ENCODE measurements at regions of chr20 and their contacts with region 1.

Region 1: DNA sequence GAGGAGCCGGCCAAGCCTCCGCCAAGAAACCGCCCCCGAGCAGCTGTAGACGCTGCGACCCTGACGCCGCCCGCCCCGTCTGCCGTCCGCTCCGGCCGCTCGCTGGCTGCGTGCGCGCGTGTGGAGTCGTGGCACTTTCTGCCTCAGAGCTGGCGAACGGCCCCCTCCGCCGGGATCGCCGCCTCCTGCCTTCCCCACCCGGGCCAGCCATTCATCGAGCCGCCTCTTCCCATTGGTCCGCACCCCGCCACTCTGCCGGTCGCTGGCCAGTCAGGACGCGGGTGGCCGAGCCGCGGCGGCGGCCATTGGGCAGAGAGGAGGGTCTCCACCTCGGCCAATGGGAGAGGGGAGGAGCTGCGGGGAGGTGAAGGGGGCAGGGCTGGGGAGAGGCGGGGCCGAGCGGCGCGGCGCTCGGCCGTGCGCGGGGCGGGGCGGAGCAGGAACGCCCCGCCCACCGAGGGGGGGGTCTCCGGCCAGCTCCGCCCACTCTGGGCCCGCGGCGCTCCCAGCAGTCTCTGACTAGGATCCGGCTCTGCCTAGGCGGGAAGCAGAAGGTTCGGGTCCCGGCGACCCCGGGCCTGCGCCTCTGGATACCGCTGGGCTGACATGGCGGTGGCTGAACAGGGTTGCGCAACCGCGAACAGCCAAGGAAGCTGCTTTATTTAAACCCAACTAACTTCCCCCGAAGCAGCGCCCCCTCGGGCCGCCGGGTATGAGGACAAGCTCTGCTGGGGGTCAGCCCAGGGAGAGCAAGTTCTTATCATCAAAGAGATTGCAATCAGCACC is at the start of gene RRBP1:
- DNase-seq: peak; percentile 98
- ATAC-seq: peak; percentile 97
- H3K4me3 Mint-ChIP-seq: peak within 1 kb of the TSS; percentile 77
- H3K27ac Mint-ChIP-seq: peak within 1 kb of the TSS; percentile 88
- H3K4me1 Mint-ChIP-seq: peaks cover 32% of the 10 kb centered on the region
- H3K27me3 Mint-ChIP-seq: peaks cover 29% of the 10 kb centered on the region
- total RNA-seq, gene RRBP1: 64.3 to 66.7 TPM

Region 2: DNA sequence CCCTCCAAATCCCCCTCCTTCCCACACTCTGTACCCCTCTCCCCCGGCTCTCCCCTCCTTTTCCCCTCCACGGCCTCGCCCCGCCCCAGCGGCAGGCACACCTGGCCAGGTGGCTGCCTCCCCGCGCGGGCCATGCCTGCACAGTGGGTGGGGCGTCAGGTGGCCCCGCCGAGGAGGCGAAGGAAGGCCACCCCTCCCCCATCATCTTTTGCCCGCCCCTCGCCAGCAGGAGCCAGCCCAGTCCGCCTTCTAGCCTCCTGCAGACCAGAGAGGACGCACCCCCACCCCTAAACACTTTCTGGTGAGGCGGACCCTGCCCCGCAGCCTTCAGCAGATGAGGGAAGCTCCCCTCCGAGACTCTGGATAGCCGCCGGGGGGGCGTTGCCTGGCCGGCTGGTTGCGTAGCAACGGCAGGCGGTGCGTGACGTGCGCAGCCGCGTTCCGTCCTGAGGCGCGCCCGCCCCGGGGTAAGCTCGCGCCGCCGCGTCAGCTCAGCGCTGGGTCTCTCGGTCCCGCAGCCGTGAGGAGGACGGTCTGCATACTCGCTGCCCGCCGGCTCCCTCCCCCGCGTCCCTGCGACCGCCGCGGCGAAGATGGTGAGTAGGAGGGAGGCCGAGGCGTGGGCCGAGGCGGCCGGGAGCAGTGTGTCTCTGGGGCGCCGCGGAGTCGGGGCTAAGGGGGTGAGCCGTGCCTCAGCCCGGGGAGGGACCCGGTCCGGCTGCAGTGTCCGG is 112.5 kb before region 1 on chr20 and contains the start of gene DSTN:
- CTCF ChIA-PET with region 1: interaction called, 22 read pairs
- POLR2A ChIA-PET with region 1: interaction called, 14 read pairs
- DNase-seq: peak; percentile 90
- ATAC-seq: peak; percentile 92
- H3K4me3 Mint-ChIP-seq: peak within 1 kb of the TSS; percentile 92
- H3K27ac Mint-ChIP-seq: peak within 1 kb of the TSS; percentile 87
- H3K4me1 Mint-ChIP-seq: peaks cover 25% of the 10 kb centered on the region
- H3K27me3 Mint-ChIP-seq: peaks cover 20% of the 10 kb centered on the region
- total RNA-seq, gene DSTN: 59.0 to 63.6 TPM

Region 3: DNA sequence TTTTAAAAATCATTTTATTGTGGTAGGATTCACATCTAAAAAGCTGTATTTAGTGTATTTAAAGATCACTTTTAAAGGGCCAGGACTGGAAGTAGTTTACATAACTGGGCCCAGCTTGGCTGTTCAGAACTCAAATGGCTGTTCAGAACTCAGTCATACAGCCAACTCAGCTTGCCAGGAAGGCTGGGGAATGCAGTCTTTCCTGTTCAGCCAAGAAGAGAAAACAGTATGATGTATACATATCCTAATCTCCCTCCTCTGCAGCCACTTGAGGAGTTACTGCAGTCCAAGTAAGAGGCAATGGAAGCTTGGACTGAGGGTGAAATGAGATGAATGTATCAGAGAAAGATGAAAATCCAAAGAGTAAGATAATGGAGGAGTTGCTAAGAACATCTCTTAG is 87.9 kb before region 1 on chr20:
- CTCF ChIA-PET with region 1: no interaction called
- POLR2A ChIA-PET with region 1: no interaction called
- DNase-seq: no peak
- ATAC-seq: no peak
- H3K4me3 Mint-ChIP-seq: no peak overlapping the region
- H3K27ac Mint-ChIP-seq: no peak overlapping the region
- H3K4me1 Mint-ChIP-seq: peaks cover 3% of the 10 kb centered on the region
- H3K27me3 Mint-ChIP-seq: no peaks in the 10 kb centered on the region

Region 4: DNA sequence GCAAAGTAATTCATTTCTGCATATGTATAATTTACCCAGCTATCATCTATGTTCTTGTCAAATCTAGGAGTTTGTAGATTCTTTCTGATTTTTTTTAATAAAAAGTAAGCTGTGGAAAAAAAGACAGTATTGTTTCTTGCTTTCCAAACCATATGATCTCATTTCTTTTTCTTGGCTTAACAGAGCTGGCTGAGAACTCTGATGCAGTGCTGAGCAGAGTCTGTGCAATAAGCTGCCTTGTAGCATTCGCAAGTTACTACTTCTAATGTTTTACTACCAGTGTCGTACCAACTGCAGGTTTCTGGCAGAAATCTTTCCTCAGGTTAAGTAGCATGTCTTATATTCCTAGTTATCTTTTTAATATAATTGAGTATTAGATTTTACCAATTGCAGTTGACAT is 15.8 kb before region 1 on chr20:
- CTCF ChIA-PET with region 1: interaction called, 39 read pairs
- POLR2A ChIA-PET with region 1: interaction called, 4 read pairs
- DNase-seq: no peak
- ATAC-seq: no peak
- H3K4me3 Mint-ChIP-seq: no peak overlapping the region
- H3K27ac Mint-ChIP-seq: no peak overlapping the region
- H3K4me1 Mint-ChIP-seq: peaks cover 56% of the 10 kb centered on the region
- H3K27me3 Mint-ChIP-seq: no peaks in the 10 kb centered on the region

Region 5: DNA sequence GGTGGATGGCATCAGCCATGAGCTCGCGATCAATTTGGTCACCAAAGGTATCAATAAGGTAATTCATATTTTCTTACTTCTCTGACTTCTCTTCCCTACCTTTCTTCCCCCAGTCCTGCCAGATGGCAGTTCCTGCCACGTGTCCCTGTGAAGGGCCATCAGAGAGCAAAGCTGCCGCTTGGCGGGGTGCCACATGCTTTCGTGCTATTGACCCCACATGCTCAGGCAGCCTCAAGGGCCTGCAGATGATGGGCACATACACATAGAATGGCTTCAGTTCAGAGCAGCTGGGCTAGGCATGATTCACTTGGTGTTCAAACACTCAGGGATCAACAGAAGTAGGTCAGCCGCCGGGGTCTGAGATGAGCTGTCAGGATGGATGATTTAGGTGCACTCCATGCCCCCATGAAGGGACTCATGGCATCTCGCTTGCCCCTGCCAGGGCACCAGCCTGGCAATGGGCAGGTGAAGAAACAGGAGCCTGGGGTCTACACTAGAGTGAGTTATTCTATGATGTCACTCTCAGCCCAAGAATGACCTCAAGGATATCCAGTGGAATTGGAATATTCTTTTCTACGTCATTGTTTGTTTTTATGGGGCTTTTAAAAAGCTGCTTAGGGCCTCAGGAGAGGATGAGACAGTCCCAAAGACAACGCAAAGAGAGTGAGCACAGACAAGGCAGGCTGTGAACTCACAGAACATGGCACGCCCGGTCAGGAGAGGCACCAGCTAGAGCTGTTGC is 43.0 kb after region 1 on chr20:
- CTCF ChIA-PET with region 1: no interaction called
- POLR2A ChIA-PET with region 1: no interaction called
- DNase-seq: no peak
- ATAC-seq: no peak
- H3K4me3 Mint-ChIP-seq: no peak overlapping the region
- H3K27ac Mint-ChIP-seq: no peak overlapping the region
- H3K4me1 Mint-ChIP-seq: no peaks in the 10 kb centered on the region
- H3K27me3 Mint-ChIP-seq: no peaks in the 10 kb centered on the region

Region 6: GRCh38 chr20:17854307-17854903 is 172.1 kb after region 1 on chr20:
- CTCF ChIA-PET with region 1: interaction called, 26 read pairs
- POLR2A ChIA-PET with region 1: no interaction called
- DNase-seq: peak; percentile 28
- ATAC-seq: no peak
- H3K4me3 Mint-ChIP-seq: no peak overlapping the region
- H3K27ac Mint-ChIP-seq: peak overlapping the region; percentile 31
- H3K4me1 Mint-ChIP-seq: peaks cover 51% of the 10 kb centered on the region
- H3K27me3 Mint-ChIP-seq: peaks cover 22% of the 10 kb centered on the region

Region 7: DNA sequence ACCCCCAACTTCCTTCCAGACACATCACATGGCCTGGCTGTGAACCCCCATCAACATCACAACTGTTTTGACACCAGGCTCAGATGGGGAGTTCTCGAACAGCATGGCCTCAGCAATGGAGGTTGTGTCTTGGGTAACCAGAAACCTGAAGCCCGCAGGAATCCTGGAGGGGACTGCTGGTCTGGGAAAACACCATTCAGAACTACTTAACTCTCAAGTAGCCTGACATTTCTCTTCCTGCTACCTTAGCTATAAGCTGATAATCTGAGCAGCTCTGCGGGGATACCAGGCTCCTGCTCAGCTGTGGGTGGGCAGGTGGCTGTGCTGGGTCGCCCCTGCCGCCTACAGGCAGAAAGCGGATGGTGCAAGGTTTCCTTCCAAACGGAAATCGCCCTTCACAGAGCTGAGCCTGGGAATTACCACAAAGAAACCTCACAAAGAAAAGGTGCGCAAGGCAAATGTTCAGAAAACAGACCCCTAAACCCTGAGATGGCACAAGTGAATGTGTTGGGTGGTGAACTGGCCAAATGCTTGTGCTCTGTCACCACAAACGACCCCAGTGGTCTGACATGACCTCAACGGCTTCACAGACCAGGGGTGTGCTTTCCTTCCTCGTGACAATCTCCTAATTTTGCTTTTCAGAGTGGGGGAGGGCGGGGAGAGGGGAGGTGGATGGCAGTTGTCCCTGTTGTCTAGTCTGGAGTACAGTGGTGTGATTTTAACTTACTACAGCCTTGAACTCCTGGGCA is 256.7 kb after region 1 on chr20:
- CTCF ChIA-PET with region 1: interaction called, 33 read pairs
- POLR2A ChIA-PET with region 1: no interaction called
- DNase-seq: peak; percentile 74
- ATAC-seq: peak; percentile 82
- H3K4me3 Mint-ChIP-seq: no peak overlapping the region
- H3K27ac Mint-ChIP-seq: peak overlapping the region; percentile 66
- H3K4me1 Mint-ChIP-seq: peaks cover 28% of the 10 kb centered on the region
- H3K27me3 Mint-ChIP-seq: no peaks in the 10 kb centered on the region

Measured in activated CD8-positive, alpha-beta T cell treated with anti-CD3 and anti-CD28 coated beads, Interleukin-2, amount 10 ng/mL, durations not matched to agents 7 days and 5 days (primary cell).